GM12878 (cell line): ENCODE measurements at regions of chr12 and their contacts with region 1.

Region 1: DNA sequence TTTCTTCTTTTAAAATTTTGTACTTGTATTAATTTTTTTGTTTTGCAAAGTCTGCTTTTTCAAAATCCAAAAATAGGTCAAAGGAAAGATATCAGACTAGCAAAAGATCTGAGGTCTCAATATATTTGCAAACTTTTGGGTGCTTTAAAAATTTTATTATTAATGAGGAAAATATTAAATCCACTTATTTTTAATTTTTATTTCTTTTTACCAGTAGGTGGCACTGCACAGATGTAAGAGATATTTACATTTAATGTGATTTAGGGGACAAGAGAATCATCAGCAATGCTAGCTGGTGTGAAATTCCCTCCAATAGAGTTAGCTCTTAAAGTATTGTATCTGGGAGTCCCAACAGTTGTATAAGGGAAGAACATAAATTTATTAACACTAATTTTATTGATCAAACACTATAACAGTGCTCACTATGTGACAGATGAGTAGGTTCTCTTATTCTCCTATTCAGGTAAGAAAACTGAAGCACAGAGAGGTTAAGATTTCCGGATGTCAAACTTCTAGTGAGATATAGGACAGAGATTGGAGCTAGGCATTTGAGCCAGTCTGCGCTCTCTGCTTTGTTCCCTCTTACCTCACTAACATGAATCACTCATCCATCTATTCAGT is 30.5 kb downstream of the ALX1 start:
- DNase-seq: no peak
- ATAC-seq: no peak
- H3K4me3 ChIP-seq: no peak overlapping the region
- H3K27ac ChIP-seq: no peak overlapping the region
- H3K4me1 ChIP-seq: no peaks in the 10 kb centered on the region
- H3K27me3 ChIP-seq: no peaks in the 10 kb centered on the region
- CTCF ChIP-seq: peak in 2 of 3 experiments; percentile 5 to 30; a peak in 2 of 6 replicates
- EP300 ChIP-seq: no peak
- POLR2A ChIP-seq: no peak
- RAD21 ChIP-seq: no peak; the same call in 1 of the 2 replicates

Region 2: DNA sequence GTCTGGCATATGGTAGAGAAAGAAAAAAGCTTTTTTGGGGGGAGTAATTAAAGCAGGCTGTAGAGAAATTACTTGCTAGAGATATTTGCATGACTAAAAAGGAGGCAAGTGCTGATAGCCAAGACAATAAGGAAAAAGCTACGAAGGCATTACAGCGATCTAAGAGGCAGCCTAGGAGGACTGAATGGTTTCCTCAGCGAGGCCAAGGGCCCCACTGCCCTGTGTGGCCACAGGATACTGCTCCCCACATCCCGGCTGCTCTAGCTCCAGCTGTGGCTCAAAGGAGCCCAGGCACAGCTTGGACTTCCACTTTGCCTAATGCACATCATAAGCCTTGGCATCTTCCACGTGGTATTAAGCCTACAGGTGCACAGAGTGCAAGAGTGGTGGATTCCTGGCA is 220.8 kb before region 1 on chr12:
- CTCF ChIA-PET with region 1: no interaction called
- POLR2A ChIA-PET with region 1: no interaction called
- RAD21 ChIA-PET with region 1: no interaction called
- SMC1A ChIA-PET with region 1: no interaction called
- in situ Hi-C with region 1: no loop called
- intact Hi-C with region 1: no loop called
- DNase-seq: no peak
- ATAC-seq: no peak
- H3K4me3 ChIP-seq: no peak overlapping the region
- H3K27ac ChIP-seq: no peak overlapping the region
- H3K4me1 ChIP-seq: no peaks in the 10 kb centered on the region
- H3K27me3 ChIP-seq: no peaks in the 10 kb centered on the region
- CTCF ChIP-seq: no peak
- EP300 ChIP-seq: no peak
- POLR2A ChIP-seq: no peak
- RAD21 ChIP-seq: no peak

Region 3: DNA sequence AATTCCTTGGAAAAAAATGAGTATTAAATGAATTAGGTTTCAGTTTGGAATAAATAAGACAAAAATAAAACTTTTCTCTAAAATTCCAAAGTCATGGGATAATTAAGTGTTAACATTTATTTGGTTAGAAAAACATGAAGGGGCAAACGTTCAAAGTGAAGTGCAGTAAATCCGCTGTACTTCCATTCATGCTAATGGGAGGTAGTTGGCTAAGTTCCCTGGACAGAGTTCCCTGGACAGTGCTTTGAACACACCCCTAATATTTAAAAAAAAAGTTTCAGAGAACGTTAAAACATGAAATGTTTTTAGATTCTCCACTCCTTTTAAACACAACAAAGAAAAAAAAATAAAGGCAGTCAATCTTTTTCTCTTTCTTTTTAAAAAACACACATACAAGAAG is 14.2 kb before region 1 on chr12:
- CTCF ChIA-PET with region 1: interaction called, 12 read pairs
- POLR2A ChIA-PET with region 1: no interaction called
- RAD21 ChIA-PET with region 1: no interaction called
- SMC1A ChIA-PET with region 1: interaction called, 5 read pairs
- in situ Hi-C with region 1: no loop called
- intact Hi-C with region 1: no loop called
- DNase-seq: no peak
- ATAC-seq: no peak
- H3K4me3 ChIP-seq: no peak overlapping the region
- H3K27ac ChIP-seq: no peak overlapping the region
- H3K4me1 ChIP-seq: no peaks in the 10 kb centered on the region
- H3K27me3 ChIP-seq: no peaks in the 10 kb centered on the region
- CTCF ChIP-seq: no peak
- EP300 ChIP-seq: no peak
- POLR2A ChIP-seq: no peak
- RAD21 ChIP-seq: no peak

Region 4: DNA sequence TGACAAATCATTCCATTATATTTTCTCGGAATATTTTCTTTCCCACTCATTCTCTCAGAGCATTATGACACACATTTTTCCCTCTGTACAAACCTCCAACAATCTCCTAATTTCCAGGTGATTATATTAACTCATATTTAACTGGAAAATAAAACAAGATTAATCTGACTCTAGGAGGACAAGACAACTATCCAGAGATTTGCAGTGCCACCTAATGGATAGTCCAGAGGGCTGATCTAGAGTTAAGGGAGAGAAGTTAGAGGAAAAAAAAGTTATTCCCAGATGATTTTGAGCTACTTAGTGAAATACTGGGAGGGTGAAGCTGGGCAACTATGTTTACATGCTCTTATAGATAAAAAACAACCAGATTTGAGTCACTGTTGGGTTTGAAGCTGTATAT is 131.2 kb after region 1 on chr12:
- CTCF ChIA-PET with region 1: interaction called, 13 read pairs
- POLR2A ChIA-PET with region 1: no interaction called
- RAD21 ChIA-PET with region 1: no interaction called
- SMC1A ChIA-PET with region 1: interaction called, 5 read pairs
- in situ Hi-C with region 1: no loop called
- intact Hi-C with region 1: no loop called
- DNase-seq: no peak
- ATAC-seq: no peak
- H3K4me3 ChIP-seq: no peak overlapping the region
- H3K27ac ChIP-seq: no peak overlapping the region
- H3K4me1 ChIP-seq: no peaks in the 10 kb centered on the region
- H3K27me3 ChIP-seq: peaks cover 0 to 3% of the 10 kb centered on the region in 2 experiments; a peak in 1 of 4 replicates
- CTCF ChIP-seq: peak in 1 of 3 experiments; percentile 27; a peak in 2 of 6 replicates
- EP300 ChIP-seq: no peak
- POLR2A ChIP-seq: no peak
- RAD21 ChIP-seq: peak; percentile 48; the same call in 1 of the 2 replicates

Region 5: DNA sequence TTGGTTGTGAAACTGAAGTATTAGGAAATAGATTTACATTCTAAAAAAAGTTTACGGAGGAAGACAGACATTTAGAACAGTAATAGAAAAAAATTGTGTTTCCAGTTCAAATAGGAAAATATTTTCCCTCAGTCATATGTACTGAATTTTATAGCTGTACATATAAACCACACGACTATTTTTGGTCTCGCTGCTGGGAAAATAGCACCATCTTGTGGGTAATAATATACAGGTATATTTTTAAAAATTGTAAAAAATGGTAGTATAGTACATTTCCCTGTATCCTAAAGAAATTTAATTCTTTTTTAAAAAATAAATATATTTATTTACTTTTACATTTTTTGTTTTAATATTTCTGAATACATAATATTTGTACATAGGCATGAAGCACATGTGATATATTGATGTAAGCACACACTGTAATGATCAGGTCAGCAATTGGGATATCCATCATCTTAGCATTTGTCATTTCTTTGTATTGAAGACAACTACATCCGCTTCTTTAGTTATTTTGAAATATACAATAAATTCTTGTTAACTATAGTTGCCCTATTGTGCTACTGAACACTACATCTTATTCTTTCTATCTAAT is 138.1 kb after region 1 on chr12:
- CTCF ChIA-PET with region 1: interaction called, 18 read pairs
- POLR2A ChIA-PET with region 1: no interaction called
- RAD21 ChIA-PET with region 1: interaction called, 4 read pairs
- SMC1A ChIA-PET with region 1: interaction called, 17 read pairs
- in situ Hi-C with region 1: no loop called
- intact Hi-C with region 1: loop called (anchors 2 kb)
- DNase-seq: no peak
- ATAC-seq: peak; percentile 58
- H3K4me3 ChIP-seq: no peak overlapping the region
- H3K27ac ChIP-seq: no peak overlapping the region
- H3K4me1 ChIP-seq: no peaks in the 10 kb centered on the region
- H3K27me3 ChIP-seq: peaks cover 0 to 3% of the 10 kb centered on the region in 2 experiments; a peak in 1 of 4 replicates
- CTCF ChIP-seq: peak in 2 of 3 experiments; percentile 18 to 24; a peak in 3 of 6 replicates
- EP300 ChIP-seq: no peak
- POLR2A ChIP-seq: no peak
- RAD21 ChIP-seq: peak; percentile 66